ENCODE measurements at regions of chr1 and their contacts with region 1.

Region 1: GRCh38 chr1:121558514-121558913 is 373.7 kb downstream of the SRGAP2C start:
- DNase-seq: peak; percentile 67
- H3K4me3 ChIP-seq: no peak overlapping the region
- H3K27ac ChIP-seq: peak overlapping the region; percentile 61
- H3K4me1 ChIP-seq: peaks cover 12% of the 10 kb centered on the region
- H3K27me3 ChIP-seq: no peaks in the 10 kb centered on the region
- CTCF ChIP-seq: no peak

Region 2: GRCh38 chr1:121471523-121471922 is 87.0 kb before region 1 on chr1:
- CTCF ChIA-PET with region 1: no interaction called
- POLR2A ChIA-PET with region 1: no interaction called
- intact Hi-C with region 1: loop called (anchors 5 kb)
- DNase-seq: no peak
- H3K4me3 ChIP-seq: no peak overlapping the region
- H3K27ac ChIP-seq: no peak overlapping the region
- H3K4me1 ChIP-seq: no peaks in the 10 kb centered on the region
- H3K27me3 ChIP-seq: no peaks in the 10 kb centered on the region
- CTCF ChIP-seq: no peak

Region 3: GRCh38 chr1:121483961-121484424 is 74.5 kb before region 1 on chr1:
- CTCF ChIA-PET with region 1: no interaction called
- POLR2A ChIA-PET with region 1: no interaction called
- intact Hi-C with region 1: no loop called
- DNase-seq: peak; percentile 30
- H3K4me3 ChIP-seq: no peak overlapping the region
- H3K27ac ChIP-seq: peak overlapping the region; percentile 21
- H3K4me1 ChIP-seq: no peaks in the 10 kb centered on the region
- H3K27me3 ChIP-seq: no peaks in the 10 kb centered on the region
- CTCF ChIP-seq: no peak

Region 4: GRCh38 chr1:121516234-121516967 is 42.1 kb before region 1 on chr1:
- CTCF ChIA-PET with region 1: no interaction called
- POLR2A ChIA-PET with region 1: no interaction called
- intact Hi-C with region 1: no loop called
- DNase-seq: no peak
- H3K4me3 ChIP-seq: no peak overlapping the region
- H3K27ac ChIP-seq: no peak overlapping the region
- H3K4me1 ChIP-seq: peaks cover 8% of the 10 kb centered on the region
- H3K27me3 ChIP-seq: no peaks in the 10 kb centered on the region
- CTCF ChIP-seq: no peak